PC-9 (cell line): ENCODE measurements at regions of chr1 and their contacts with region 1.

Region 1: GRCh38 chr1:228043281-228043890 is 36.6 kb downstream of the WNT3A start:
- DNase-seq: peak; percentile 90 to 96
- H3K4me3 ChIP-seq: 0 out of 2 replicates have a peak overlapping the region, but pooled peaks have one; percentile 13
- H3K27ac ChIP-seq: peak overlapping the region; percentile 68
- H3K4me1 ChIP-seq: peaks cover 45% of the 10 kb centered on the region
- H3K27me3 ChIP-seq: no peaks in the 10 kb centered on the region
- CTCF ChIP-seq: no peak

Region 2: GRCh38 chr1:227886993-227887696 is 156.2 kb before region 1 on chr1:
- CTCF ChIA-PET with region 1: no interaction called
- POLR2A ChIA-PET with region 1: no interaction called
- intact Hi-C with region 1: no loop called
- DNase-seq: no peak
- H3K4me3 ChIP-seq: no peak overlapping the region
- H3K27ac ChIP-seq: no peak overlapping the region
- H3K4me1 ChIP-seq: 0 out of 2 replicates have a peak, but pooled peaks cover 7% of the 10 kb centered on the region
- H3K27me3 ChIP-seq: no peaks in the 10 kb centered on the region
- CTCF ChIP-seq: no peak

Region 3: GRCh38 chr1:228013935-228014930 is 29.2 kb before region 1 on chr1:
- CTCF ChIA-PET with region 1: no interaction called
- POLR2A ChIA-PET with region 1: interaction called, 5 read pairs
- intact Hi-C with region 1: loop called (anchors 1 kb)
- DNase-seq: no peak
- H3K4me3 ChIP-seq: no peak overlapping the region
- H3K27ac ChIP-seq: no peak overlapping the region
- H3K4me1 ChIP-seq: peaks cover 9% of the 10 kb centered on the region; the same call in 1 of the 2 replicates
- H3K27me3 ChIP-seq: peaks cover 13% of the 10 kb centered on the region; the same call in 1 of the 2 replicates
- CTCF ChIP-seq: no peak

Region 4: GRCh38 chr1:228059634-228060457 is 16.5 kb after region 1 on chr1:
- CTCF ChIA-PET with region 1: interaction called, 3 read pairs
- POLR2A ChIA-PET with region 1: no interaction called
- intact Hi-C with region 1: loop called (anchors 2 kb)
- DNase-seq: peak; percentile 80 to 99
- H3K4me3 ChIP-seq: peak overlapping the region; percentile 96
- H3K27ac ChIP-seq: no peak overlapping the region
- H3K4me1 ChIP-seq: peaks cover 15% of the 10 kb centered on the region
- H3K27me3 ChIP-seq: no peaks in the 10 kb centered on the region
- CTCF ChIP-seq: no peak

Region 5: DNA sequence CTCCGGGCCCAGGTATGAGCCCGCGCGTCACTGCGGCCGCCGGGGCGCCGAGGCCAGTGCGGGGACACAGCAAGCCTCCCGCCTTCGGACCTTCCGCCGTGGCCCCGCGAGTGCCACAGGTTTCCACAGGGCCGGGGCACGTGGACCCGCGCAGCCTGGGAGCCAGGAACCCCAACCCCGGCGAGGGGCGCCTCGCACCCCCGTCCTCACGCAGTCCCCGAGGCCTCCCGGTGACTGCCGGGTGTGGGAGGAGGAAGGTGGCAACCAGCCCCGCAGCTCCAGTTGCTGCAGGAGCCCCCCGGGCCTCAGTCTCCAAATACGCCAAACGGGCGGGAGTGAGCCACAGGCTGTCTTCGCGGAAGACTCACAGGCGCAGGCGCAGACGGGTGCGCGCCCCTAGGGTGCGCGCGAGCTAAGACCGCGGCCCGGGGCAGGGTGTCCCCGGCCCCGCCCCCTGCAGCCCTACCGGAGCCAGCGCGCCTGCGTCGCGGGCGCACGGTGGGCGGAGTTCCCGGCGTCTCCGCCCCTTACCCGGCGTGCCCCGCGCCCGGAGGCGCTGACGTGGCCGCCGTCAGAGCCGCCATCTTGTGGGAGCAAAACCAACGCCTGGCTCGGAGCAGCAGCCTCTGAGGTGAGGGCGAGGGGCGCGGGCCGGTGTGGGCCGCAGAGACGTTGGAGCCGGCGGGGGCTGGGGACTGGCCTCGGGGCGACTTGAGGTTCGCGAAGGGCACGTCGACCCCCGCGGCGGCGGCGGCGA is 38.9 kb after region 1 on chr1 and contains the start of gene ARF1:
- CTCF ChIA-PET with region 1: no interaction called
- POLR2A ChIA-PET with region 1: interaction called, 5 read pairs
- intact Hi-C with region 1: loop called (anchors 1 kb)
- DNase-seq: peak; percentile 70 to 95
- H3K4me3 ChIP-seq: peak within 1 kb of the TSS; percentile 100
- H3K27ac ChIP-seq: peak within 1 kb of the TSS; percentile 78
- H3K4me1 ChIP-seq: peaks cover 38% of the 10 kb centered on the region
- H3K27me3 ChIP-seq: no peaks in the 10 kb centered on the region
- CTCF ChIP-seq: no peak
- total RNA-seq, gene ARF1: 431 and 595 TPM in 2 replicates